Sigmoid colon (tissue), 7 donors: ENCODE measurements at regions of chr1 and their contacts with region 1.

Region 1: GRCh38 chr1:192489748-192490147 is 85.8 kb upstream of the RGS1 start:
- DNase-seq: peak; percentile 92
- H3K4me3 ChIP-seq: no peak overlapping the region
- H3K27ac ChIP-seq: peak overlapping the region; percentile 85 to 89 (median 88)
- H3K4me1 ChIP-seq: peaks cover 0 to 69% (median 51%) of the 10 kb centered on the region in 4 donors
- H3K27me3 ChIP-seq: no peaks in the 10 kb centered on the region
- CTCF ChIP-seq: no peak
- EP300 ChIP-seq: peak; percentile 81 to 97 (median 95)
- POLR2A ChIP-seq: no peak

Region 2: DNA sequence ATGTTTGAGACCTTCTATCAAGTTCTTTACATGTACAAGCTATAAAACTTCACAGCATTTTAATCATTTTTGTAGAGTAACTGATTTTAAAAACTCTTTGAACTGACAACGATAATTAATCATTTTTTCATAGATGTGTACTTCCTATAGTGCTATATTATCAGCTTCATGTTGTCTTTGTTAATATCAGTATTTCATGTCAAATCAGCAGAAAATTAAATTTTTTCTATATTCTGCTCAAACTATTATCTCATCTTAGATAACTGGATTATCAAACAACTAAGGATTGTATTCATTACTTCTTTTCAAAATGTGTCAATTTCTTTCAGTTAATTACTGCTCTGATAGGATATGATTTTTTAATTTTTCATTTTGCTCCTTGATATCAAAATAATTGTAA is 546.1 kb before region 1 on chr1:
- intact Hi-C with region 1: no loop called
- DNase-seq: no peak
- H3K4me3 ChIP-seq: no peak overlapping the region
- H3K27ac ChIP-seq: no peak overlapping the region
- H3K4me1 ChIP-seq: no peaks in the 10 kb centered on the region
- H3K27me3 ChIP-seq: no peaks in the 10 kb centered on the region
- CTCF ChIP-seq: no peak
- EP300 ChIP-seq: no peak
- POLR2A ChIP-seq: no peak

Region 3: GRCh38 chr1:192284927-192285326 is 204.8 kb before region 1 on chr1:
- intact Hi-C with region 1: no loop called
- DNase-seq: no peak
- H3K4me3 ChIP-seq: no peak overlapping the region
- H3K27ac ChIP-seq: no peak overlapping the region
- H3K4me1 ChIP-seq: no peaks in the 10 kb centered on the region
- H3K27me3 ChIP-seq: no peaks in the 10 kb centered on the region
- CTCF ChIP-seq: no peak
- EP300 ChIP-seq: no peak
- POLR2A ChIP-seq: no peak

Region 4: GRCh38 chr1:192530254-192530653 is 40.5 kb after region 1 on chr1:
- intact Hi-C with region 1: loop called (anchors 2 kb)
- DNase-seq: no peak
- H3K4me3 ChIP-seq: no peak overlapping the region
- H3K27ac ChIP-seq: peak overlapping the region; percentile 74 to 87 (median 84)
- H3K4me1 ChIP-seq: peaks cover 0 to 46% (median 33%) of the 10 kb centered on the region in 4 donors
- H3K27me3 ChIP-seq: no peaks in the 10 kb centered on the region
- CTCF ChIP-seq: no peak
- EP300 ChIP-seq: peak in 2 of 4 donors; percentile 0 to 38
- POLR2A ChIP-seq: no peak

Region 5: GRCh38 chr1:192592981-192593708 is 103.4 kb after region 1 on chr1:
- intact Hi-C with region 1: loop called (anchors 5 kb)
- DNase-seq: no peak
- H3K4me3 ChIP-seq: peak overlapping the region in 2 of 4 donors; percentile 9 to 10
- H3K27ac ChIP-seq: peak overlapping the region; percentile 75 to 83 (median 80)
- H3K4me1 ChIP-seq: peaks cover 0 to 22% (median 15%) of the 10 kb centered on the region in 4 donors
- H3K27me3 ChIP-seq: no peaks in the 10 kb centered on the region
- CTCF ChIP-seq: no peak
- EP300 ChIP-seq: peak in 2 of 4 donors; percentile 71 to 83
- POLR2A ChIP-seq: no peak